ENCODE measurements at regions of chr2 and their contacts with region 1.

Region 1: GRCh38 chr2:215949991-215950404 is 63.4 kb downstream of the MREG start:
- DNase-seq: no peak
- ATAC-seq: peak; percentile 87
- H3K4me3 Mint-ChIP-seq: no peak overlapping the region
- H3K27ac Mint-ChIP-seq: no peak overlapping the region
- H3K4me1 Mint-ChIP-seq: no peaks in the 10 kb centered on the region
- H3K27me3 Mint-ChIP-seq: no peaks in the 10 kb centered on the region

Region 2: GRCh38 chr2:215764441-215765048 is 185.5 kb before region 1 on chr2:
- CTCF ChIA-PET with region 1: no interaction called
- POLR2A ChIA-PET with region 1: no interaction called
- intact Hi-C with region 1: no loop called
- DNase-seq: no peak
- ATAC-seq: no peak
- H3K4me3 Mint-ChIP-seq: no peak overlapping the region
- H3K27ac Mint-ChIP-seq: no peak overlapping the region
- H3K4me1 Mint-ChIP-seq: peaks cover 28% of the 10 kb centered on the region
- H3K27me3 Mint-ChIP-seq: no peaks in the 10 kb centered on the region

Region 3: GRCh38 chr2:215961981-215962380 is 12.0 kb after region 1 on chr2:
- CTCF ChIA-PET with region 1: interaction called, 23 read pairs
- POLR2A ChIA-PET with region 1: no interaction called
- intact Hi-C with region 1: no loop called
- DNase-seq: no peak
- ATAC-seq: no peak
- H3K4me3 Mint-ChIP-seq: no peak overlapping the region
- H3K27ac Mint-ChIP-seq: no peak overlapping the region
- H3K4me1 Mint-ChIP-seq: no peaks in the 10 kb centered on the region
- H3K27me3 Mint-ChIP-seq: no peaks in the 10 kb centered on the region

Region 4: GRCh38 chr2:216006164-216006663 is 56.2 kb after region 1 on chr2:
- CTCF ChIA-PET with region 1: interaction called, 10 read pairs
- POLR2A ChIA-PET with region 1: interaction called, 4 read pairs
- intact Hi-C with region 1: no loop called
- DNase-seq: peak; percentile 73
- ATAC-seq: peak; percentile 60
- H3K4me3 Mint-ChIP-seq: peak overlapping the region; percentile 42
- H3K27ac Mint-ChIP-seq: peak overlapping the region; percentile 85
- H3K4me1 Mint-ChIP-seq: peaks cover 50% of the 10 kb centered on the region
- H3K27me3 Mint-ChIP-seq: no peaks in the 10 kb centered on the region

Region 5: DNA sequence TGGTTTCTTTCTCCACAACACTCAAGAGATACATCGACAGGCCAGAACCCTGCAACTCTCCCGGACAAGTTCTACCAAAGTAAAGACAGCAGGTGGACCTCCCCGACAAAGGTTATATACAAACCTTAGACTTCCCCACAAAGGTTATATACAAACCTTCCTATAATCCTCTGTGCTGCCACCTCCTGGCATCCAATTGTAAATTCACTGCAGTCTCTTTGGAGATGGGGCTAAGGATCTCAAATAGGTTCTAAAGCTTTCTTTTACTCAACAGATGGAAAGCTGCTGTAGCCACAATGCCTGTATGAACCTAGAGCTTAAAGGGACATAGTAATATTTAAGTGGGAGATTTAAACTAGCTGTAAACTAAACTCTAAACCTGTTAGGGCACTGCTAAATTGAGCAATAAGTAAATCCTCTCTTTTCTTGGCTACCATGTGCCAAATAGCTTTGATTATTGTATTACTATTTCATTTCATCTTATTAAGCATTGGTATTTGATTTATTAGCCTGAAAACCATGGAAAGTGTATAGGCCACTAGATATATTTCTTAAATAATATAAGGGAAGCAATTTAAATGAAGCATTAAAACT is 73.2 kb after region 1 on chr2:
- CTCF ChIA-PET with region 1: interaction called, 102 read pairs
- POLR2A ChIA-PET with region 1: no interaction called
- intact Hi-C with region 1: loop called (anchors 1 kb)
- DNase-seq: peak; percentile 72
- ATAC-seq: peak; percentile 88
- H3K4me3 Mint-ChIP-seq: no peak overlapping the region
- H3K27ac Mint-ChIP-seq: no peak overlapping the region
- H3K4me1 Mint-ChIP-seq: peaks cover 5% of the 10 kb centered on the region
- H3K27me3 Mint-ChIP-seq: no peaks in the 10 kb centered on the region

Region 6: GRCh38 chr2:216215658-216216390 is 265.8 kb after region 1 on chr2:
- CTCF ChIA-PET with region 1: no interaction called
- POLR2A ChIA-PET with region 1: no interaction called
- intact Hi-C with region 1: no loop called
- DNase-seq: no peak
- ATAC-seq: no peak
- H3K4me3 Mint-ChIP-seq: no peak overlapping the region
- H3K27ac Mint-ChIP-seq: no peak overlapping the region
- H3K4me1 Mint-ChIP-seq: peaks cover 28% of the 10 kb centered on the region
- H3K27me3 Mint-ChIP-seq: no peaks in the 10 kb centered on the region